Dorsolateral prefrontal cortex (tissue), 120 donors: ENCODE measurements at regions of chr15 and their contacts with region 1.

Region 1: GRCh38 chr15:28984421-28985315 is 98.9 kb downstream of the APBA2 start:
- DNase-seq: peak; percentile 75 to 96 (median 91)
- H3K4me3 ChIP-seq: peak overlapping the region in 19 of 59 donors; percentile 2 to 36 (median 17)
- H3K27ac ChIP-seq: peak overlapping the region; percentile 86 to 99 (median 96)
- H3K27me3 ChIP-seq: no peaks in the 10 kb centered on the region
- CTCF ChIP-seq: peak in 17 of 56 donors; percentile 5 to 48 (median 23)

Region 2: GRCh38 chr15:28885630-28886430 is 98.8 kb before region 1 on chr15 and contains the start of gene APBA2:
- intact Hi-C with region 1: loop called in 1 of 2 experiments (anchors 10 kb)
- DNase-seq: peak in 4 of 10 donors; percentile 46 to 65 (median 47)
- H3K4me3 ChIP-seq: peak within 1 kb of the TSS; percentile 52 to 85 (median 71)
- H3K27ac ChIP-seq: peak within 1 kb of the TSS in 55 of 59 donors; percentile 5 to 87 (median 70)
- H3K27me3 ChIP-seq: peaks cover 0 to 3% (median 0%) of the 10 kb centered on the region in 45 donors
- CTCF ChIP-seq: peak in 1 of 56 donors; percentile 7
- total RNA-seq, gene APBA2: 90.7 to 210 (median 166) TPM

Region 3: DNA sequence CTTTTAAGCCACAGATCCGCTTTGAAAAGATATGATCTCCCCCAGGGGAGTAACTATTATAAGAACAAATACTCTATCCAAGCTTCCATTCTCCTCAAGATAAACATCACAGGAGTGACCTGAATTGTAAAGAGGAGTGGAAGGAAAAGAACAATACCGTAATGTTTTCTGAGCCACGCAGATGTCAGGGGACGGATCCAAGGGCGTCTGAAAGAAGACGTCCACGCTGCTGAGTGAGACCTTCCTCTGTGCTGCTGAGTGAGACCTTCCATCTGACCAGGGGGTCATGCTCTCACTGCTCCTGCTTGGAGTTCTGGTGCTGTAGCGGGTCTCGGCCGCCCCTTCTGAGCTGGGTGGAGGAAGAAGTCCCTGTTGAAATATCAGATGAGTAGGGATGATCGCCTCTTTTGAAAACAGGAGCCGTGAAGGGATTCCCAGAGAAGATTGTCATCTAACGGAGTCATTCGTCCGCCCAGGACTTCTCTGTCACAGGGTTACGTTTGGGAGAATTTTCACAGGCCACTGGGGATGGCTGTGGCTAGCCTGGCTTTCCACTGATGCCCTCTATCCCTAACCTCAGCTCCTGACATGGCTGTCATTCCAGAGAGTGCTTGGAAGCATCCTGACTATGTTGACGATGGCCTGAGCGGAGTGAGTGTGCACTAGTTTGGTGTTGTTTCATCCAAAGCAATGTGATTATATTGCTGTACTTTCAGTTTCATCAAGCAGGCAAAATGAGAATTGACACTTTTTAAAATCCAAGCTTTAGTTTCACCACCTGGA is 86.0 kb after region 1 on chr15:
- intact Hi-C with region 1: loop called in 1 of 2 experiments (anchors 5 kb)
- DNase-seq: peak in 3 of 10 donors; percentile 40 to 71 (median 46)
- H3K4me3 ChIP-seq: peak overlapping the region in 58 of 59 donors; percentile 1 to 67 (median 40)
- H3K27ac ChIP-seq: peak overlapping the region; percentile 76 to 99 (median 94)
- H3K27me3 ChIP-seq: no peaks in the 10 kb centered on the region
- CTCF ChIP-seq: no peak